ENCODE measurements at regions of chr5 and their contacts with region 1.

Region 1: GRCh38 chr5:139392678-139393496 is 2.0 kb downstream of the PROB1 start:
- DNase-seq: peak; percentile 39 to 87 (median 60)
- ATAC-seq: peak; percentile 82
- H3K4me3 ChIP-seq: peak overlapping the region; percentile 76
- H3K4me3 Mint-ChIP-seq: peak overlapping the region; percentile 87 to 97 (median 90)
- H3K27ac ChIP-seq: peak overlapping the region; percentile 17
- H3K27ac Mint-ChIP-seq: peak overlapping the region in 6 of 9 donors; percentile 7 to 97 (median 59)
- H3K4me1 ChIP-seq: peaks cover 5 to 34% of the 10 kb centered on the region in 2 donors
- H3K4me1 Mint-ChIP-seq: peaks cover 12 to 61% (median 23%) of the 10 kb centered on the region in 7 donors
- H3K27me3 ChIP-seq: no peaks in the 10 kb centered on the region
- H3K27me3 Mint-ChIP-seq: no peaks in the 10 kb centered on the region

Region 2: DNA sequence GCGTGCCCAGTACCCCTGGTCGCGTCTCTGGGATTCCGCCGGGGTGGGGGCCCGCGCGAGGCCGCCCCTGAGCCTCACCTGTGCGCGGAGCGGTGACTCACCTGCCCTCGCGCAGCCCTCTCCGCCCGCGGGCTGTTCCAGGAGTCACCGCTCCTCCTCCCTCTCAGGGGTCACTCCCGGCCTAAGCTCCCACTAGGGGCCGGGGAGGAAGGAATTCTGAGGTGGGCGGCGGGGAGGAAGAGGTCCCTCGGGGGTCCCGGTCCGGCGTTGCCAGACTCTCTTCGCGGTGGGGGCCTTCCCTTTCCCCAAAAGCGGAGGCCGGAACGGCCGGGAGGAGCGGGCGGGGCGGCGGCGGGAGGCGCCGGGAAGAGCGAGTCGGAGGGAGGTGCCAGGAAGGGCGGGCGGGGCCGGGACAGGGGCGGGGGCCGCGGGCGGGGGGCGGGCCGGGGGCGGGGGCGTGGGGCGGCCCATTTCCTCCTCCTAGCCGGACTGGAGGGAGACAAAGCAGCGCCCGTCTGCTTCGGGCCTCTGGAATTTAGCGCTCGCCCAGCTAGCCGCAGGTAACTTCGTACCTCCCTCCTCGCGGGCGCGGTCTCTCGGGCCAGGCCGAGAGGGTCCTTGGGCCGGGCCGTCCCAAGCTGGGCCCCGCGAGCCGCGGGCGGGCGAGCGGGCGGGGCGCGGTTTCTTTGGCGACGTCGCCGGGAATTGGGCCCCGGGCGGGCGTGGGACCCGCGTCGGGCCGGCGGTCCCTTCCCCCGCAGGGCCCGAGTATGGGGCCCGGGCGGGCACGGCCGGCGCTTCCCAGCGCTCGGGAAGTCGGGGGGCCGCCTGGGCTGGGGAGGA is 639.7 kb before region 1 on chr5 and contains the start of gene CTNNA1:
- CTCF ChIA-PET with region 1: no interaction called
- POLR2A ChIA-PET with region 1: no interaction called
- intact Hi-C with region 1: loop called in 1 of 2 experiments (anchors 5 kb)
- DNase-seq: peak in 4 of 9 donors; percentile 11 to 67 (median 16)
- ATAC-seq: peak; percentile 68
- H3K4me3 ChIP-seq: peak within 1 kb of the TSS; percentile 50
- H3K4me3 Mint-ChIP-seq: peak within 1 kb of the TSS; percentile 60 to 89 (median 79)
- H3K27ac ChIP-seq: no peak within 1 kb of the TSS
- H3K27ac Mint-ChIP-seq: peak within 1 kb of the TSS in 5 of 9 donors; percentile 10 to 67 (median 24)
- H3K4me1 ChIP-seq: peaks cover 6 to 7% of the 10 kb centered on the region in 2 donors
- H3K4me1 Mint-ChIP-seq: peaks cover 8 to 23% (median 15%) of the 10 kb centered on the region in 7 donors
- H3K27me3 ChIP-seq: no peaks in the 10 kb centered on the region
- H3K27me3 Mint-ChIP-seq: peaks cover 42 to 51% (median 48%) of the 10 kb centered on the region in 5 donors
- total RNA-seq, gene CTNNA1: 3.7 to 52.9 (median 7.1) TPM

Region 3: GRCh38 chr5:139273572-139274289 is 119.2 kb before region 1 on chr5:
- CTCF ChIA-PET with region 1: no interaction called
- POLR2A ChIA-PET with region 1: no interaction called
- intact Hi-C with region 1: loop called in 1 of 2 experiments (anchors 1 kb)
- DNase-seq: peak; percentile 71 to 95 (median 83)
- ATAC-seq: peak; percentile 99
- H3K4me3 ChIP-seq: peak overlapping the region; percentile 71
- H3K4me3 Mint-ChIP-seq: peak overlapping the region; percentile 77 to 92 (median 90)
- H3K27ac ChIP-seq: peak overlapping the region; percentile 69
- H3K27ac Mint-ChIP-seq: peak overlapping the region; percentile 54 to 92 (median 85)
- H3K4me1 ChIP-seq: peaks cover 26 to 27% of the 10 kb centered on the region in 2 donors
- H3K4me1 Mint-ChIP-seq: peaks cover 30 to 54% (median 47%) of the 10 kb centered on the region in 7 donors
- H3K27me3 ChIP-seq: no peaks in the 10 kb centered on the region
- H3K27me3 Mint-ChIP-seq: peaks cover 0 to 3% (median 0%) of the 10 kb centered on the region in 5 donors

Region 4: DNA sequence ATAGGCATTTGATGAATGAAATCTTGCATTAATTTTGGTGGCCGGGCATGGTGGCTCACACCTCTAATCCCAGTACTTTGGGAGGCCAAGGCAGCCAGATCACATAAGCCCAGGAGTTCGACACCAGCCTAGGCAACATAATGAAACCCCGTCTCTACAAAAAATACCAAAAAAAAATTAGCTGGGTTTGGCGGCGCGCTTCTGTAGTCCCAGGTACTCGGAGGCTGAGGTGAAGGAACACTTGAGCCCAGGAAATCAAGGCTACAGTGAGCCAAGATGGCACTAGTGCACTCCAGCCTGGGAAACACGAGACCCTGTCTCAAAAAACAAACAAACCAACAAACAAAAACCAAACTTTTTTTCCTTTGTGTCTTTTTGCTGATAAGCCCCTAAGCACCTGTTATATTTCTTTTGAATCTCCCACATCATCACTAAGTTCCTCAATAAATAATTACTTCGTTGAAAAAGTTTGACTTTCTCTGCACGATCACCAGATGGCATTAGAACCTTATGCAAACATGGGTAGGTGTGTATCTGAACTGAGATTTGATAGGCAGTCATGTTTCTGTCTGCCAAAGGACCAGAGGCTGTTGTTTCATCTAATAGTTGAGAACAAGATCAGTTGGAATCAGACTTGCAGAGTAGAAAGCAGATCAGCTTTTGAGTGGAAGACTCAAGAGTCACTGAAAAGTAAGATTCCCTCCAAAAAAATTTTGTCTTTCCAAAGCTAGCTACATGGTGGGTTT is 104.8 kb before region 1 on chr5:
- CTCF ChIA-PET with region 1: interaction called, 3 read pairs
- POLR2A ChIA-PET with region 1: interaction called, 4 read pairs
- intact Hi-C with region 1: loop called (anchors 1 to 2 kb)
- DNase-seq: peak in 4 of 9 donors; percentile 21 to 38 (median 34)
- ATAC-seq: peak; percentile 57
- H3K4me3 ChIP-seq: no peak overlapping the region
- H3K4me3 Mint-ChIP-seq: no peak overlapping the region
- H3K27ac ChIP-seq: no peak overlapping the region
- H3K27ac Mint-ChIP-seq: peak overlapping the region in 2 of 9 donors; percentile 0 to 7
- H3K4me1 ChIP-seq: peaks cover 0 to 3% of the 10 kb centered on the region in 2 donors
- H3K4me1 Mint-ChIP-seq: peaks cover 0 to 20% (median 5%) of the 10 kb centered on the region in 7 donors
- H3K27me3 ChIP-seq: no peaks in the 10 kb centered on the region
- H3K27me3 Mint-ChIP-seq: no peaks in the 10 kb centered on the region

Region 5: DNA sequence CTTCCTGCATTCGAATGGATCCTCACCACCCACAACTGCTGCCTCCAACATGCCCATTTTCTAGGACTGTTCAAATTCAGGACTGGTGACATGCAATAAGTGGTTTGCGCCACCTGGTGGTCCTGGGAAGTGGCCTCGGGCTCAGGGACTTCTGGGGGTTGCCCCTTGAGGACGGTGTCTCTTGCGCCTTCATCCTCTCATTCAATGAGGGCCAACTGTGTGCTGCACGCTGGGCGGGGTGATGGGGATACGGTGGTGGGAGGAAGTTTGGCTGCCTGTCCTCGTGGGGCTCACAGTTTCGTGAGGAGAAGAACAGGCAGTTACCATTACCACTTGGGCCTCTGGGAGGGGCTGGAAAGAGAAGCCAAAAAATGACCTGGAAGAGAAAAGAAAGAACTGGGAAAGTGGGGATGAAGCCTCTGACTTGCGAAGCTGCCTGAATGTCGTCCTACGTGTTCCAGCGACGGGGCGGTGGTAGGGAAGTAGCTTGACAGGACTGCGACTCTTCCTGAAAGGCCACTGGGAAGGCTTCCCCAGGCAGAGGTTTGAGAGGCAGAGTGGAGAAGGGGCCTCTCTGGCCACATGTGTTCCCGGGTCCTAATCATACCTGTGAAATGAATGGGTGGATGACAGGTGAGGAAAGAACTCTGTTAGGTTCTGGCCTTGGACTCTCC is 451.7 kb after region 1 on chr5:
- CTCF ChIA-PET with region 1: no interaction called
- POLR2A ChIA-PET with region 1: no interaction called
- intact Hi-C with region 1: loop called in 1 of 2 experiments (anchors 5 kb)
- DNase-seq: peak; percentile 26 to 62 (median 57)
- ATAC-seq: peak; percentile 28
- H3K4me3 ChIP-seq: no peak overlapping the region
- H3K4me3 Mint-ChIP-seq: peak overlapping the region in 2 of 10 donors; percentile 21 to 49
- H3K27ac ChIP-seq: no peak overlapping the region
- H3K27ac Mint-ChIP-seq: no peak overlapping the region
- H3K4me1 ChIP-seq: peaks cover 0 to 5% of the 10 kb centered on the region in 2 donors
- H3K4me1 Mint-ChIP-seq: peaks cover 7 to 17% (median 12%) of the 10 kb centered on the region in 7 donors
- H3K27me3 ChIP-seq: no peaks in the 10 kb centered on the region
- H3K27me3 Mint-ChIP-seq: peaks cover 13 to 59% (median 16%) of the 10 kb centered on the region in 5 donors

Measured in naive thymus-derived CD4-positive, alpha-beta T cell (primary cell).